ENCODE measurements at regions of chr14 and their contacts with region 1.

Region 1: DNA sequence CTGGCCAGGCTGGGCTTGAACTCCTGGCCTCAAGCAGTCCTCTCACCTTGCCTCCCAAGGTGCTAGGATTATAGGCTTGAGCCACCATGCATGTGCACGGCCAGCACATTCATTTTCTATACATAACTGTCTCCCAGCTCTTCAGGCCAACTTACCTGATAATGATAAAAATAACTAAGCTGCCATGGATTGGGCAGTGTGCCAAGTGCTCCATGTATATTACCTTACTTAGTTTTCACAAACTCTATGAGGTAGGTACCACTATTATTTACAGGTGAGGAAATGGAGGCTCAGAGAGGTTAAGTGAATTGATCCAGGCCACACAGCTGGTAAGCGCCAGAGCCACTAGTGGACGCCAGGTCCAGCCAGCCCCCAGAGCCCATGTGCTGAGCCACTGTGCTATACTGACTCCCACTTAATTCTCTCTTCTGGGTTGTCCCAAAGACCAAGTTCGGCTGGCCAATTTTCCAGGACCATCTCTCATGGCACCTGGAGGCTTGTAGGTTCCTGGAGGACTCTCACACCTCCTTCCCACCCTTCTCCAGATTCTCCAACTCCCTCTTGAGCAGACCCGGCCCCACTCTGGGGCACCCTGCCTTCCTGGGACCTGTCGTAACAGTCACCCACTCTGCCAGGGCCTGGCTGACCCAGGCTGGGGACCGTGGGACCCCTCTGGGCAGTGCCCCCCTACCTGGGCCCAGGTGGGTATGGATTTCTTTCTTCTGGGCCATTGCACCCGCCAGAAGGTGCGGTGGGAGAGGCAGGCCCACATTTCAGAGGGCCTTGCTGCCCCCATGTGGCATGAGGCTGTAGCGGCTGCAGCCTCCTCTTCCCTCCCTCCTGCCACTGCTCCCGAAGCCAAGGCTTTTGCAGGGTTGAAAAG is 30.2 kb upstream of the CIPC start:
- DNase-seq: no peak
- ATAC-seq: peak; percentile 88
- H3K4me3 ChIP-seq: no peak overlapping the region
- H3K27ac ChIP-seq: no peak overlapping the region
- H3K4me1 ChIP-seq: 0 out of 2 replicates have a peak, but pooled peaks cover 6% of the 10 kb centered on the region
- H3K27me3 ChIP-seq: peaks cover 3 to 24% of the 10 kb centered on the region in 2 experiments; a peak in 4 of 5 replicates
- CTCF ChIP-seq: peak; percentile 93
- EP300 ChIP-seq: no peak
- POLR2A ChIP-seq: no peak
- RAD21 ChIP-seq: peak; percentile 93

Region 2: DNA sequence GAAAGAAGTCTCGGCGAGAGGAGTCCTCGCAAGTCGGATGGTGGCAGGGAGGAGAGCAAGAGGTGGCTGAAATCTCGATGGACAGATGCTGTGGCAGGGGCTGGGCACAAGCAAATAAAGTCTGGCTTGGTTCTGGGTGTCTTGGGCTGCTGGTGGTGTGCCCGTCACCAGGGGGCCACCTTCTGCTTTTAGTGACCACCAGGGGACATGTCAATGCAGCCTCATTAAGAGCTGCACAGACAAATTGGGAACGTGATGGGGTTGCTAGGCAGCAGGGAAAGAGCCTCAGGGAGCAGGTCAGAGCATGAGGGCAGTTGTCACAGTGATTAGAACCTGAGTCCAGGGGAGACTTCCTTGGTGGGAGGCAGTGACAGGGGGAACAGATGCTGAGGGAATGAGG is 197.7 kb before region 1 on chr14:
- CTCF ChIA-PET with region 1: interaction called, 68 read pairs
- POLR2A ChIA-PET with region 1: no interaction called
- in situ Hi-C with region 1: loop called (anchors 5 kb)
- intact Hi-C with region 1: no loop called
- DNase-seq: peak; percentile 16
- ATAC-seq: peak; percentile 81
- H3K4me3 ChIP-seq: no peak overlapping the region
- H3K27ac ChIP-seq: no peak overlapping the region
- H3K4me1 ChIP-seq: no peaks in the 10 kb centered on the region
- H3K27me3 ChIP-seq: peaks cover 0 to 3% of the 10 kb centered on the region in 2 experiments; a peak in 1 of 5 replicates
- CTCF ChIP-seq: peak; percentile 40
- EP300 ChIP-seq: no peak
- POLR2A ChIP-seq: no peak
- RAD21 ChIP-seq: no peak

Region 3: DNA sequence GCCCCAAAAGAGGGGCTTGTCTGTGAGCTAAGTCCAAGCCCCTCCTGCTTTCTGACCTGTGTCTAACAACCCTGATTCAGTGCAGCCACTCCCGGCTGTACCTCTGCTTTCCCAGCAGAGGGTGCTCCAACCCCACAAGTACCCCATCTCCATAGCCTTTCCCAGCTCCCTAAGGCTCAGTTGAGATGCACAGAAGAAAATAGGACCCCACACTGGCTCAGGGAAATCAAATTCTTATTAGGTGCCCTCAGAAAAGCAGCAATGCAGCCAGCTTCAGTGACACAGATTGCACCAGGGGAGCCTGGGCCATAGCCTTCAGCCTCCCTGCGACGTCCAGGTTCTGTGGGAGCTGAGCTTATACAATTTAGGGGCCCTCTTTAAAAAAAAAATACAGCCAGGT is 191.8 kb before region 1 on chr14:
- CTCF ChIA-PET with region 1: interaction called, 68 read pairs
- POLR2A ChIA-PET with region 1: interaction called, 3 read pairs
- in situ Hi-C with region 1: no loop called
- intact Hi-C with region 1: loop called (anchors 1 kb)
- DNase-seq: peak; percentile 43
- ATAC-seq: peak; percentile 93
- H3K4me3 ChIP-seq: no peak overlapping the region
- H3K27ac ChIP-seq: no peak overlapping the region
- H3K4me1 ChIP-seq: no peaks in the 10 kb centered on the region
- H3K27me3 ChIP-seq: peaks cover 4 to 10% of the 10 kb centered on the region in 2 experiments; a peak in 3 of 5 replicates
- CTCF ChIP-seq: peak; percentile 92
- EP300 ChIP-seq: no peak
- POLR2A ChIP-seq: no peak
- RAD21 ChIP-seq: peak; percentile 90

Region 4: DNA sequence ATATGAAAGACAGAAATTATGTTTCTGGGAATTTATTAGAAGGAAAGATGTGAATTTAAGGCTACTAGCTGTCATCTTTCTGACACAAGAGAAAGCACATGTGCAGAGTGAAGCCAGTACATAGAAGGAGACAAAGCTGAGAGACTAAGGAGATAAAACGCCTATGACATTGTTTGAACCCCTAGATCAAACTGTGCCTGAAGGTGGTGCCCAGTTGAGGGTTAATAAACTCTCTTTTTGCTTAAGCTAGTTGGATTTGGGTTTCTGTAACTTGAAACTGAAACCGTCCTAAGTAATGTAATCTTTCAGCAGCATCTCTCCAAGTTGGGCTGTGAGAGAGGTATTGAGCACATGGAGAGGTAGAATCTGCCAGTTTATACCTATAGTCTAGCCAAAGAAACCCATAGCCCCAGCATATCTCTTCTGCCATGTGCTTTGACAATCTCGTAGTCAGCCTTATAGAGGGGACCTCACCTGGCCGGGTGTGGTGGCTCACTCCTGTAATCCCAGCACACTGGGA is 157.4 kb before region 1 on chr14:
- CTCF ChIA-PET with region 1: interaction called, 53 read pairs
- POLR2A ChIA-PET with region 1: no interaction called
- in situ Hi-C with region 1: loop called (anchors 5 kb)
- intact Hi-C with region 1: loop called (anchors 1 kb)
- DNase-seq: no peak
- ATAC-seq: no peak
- H3K4me3 ChIP-seq: no peak overlapping the region
- H3K27ac ChIP-seq: no peak overlapping the region
- H3K4me1 ChIP-seq: peaks cover 6% of the 10 kb centered on the region; the same call in 1 of the 2 replicates
- H3K27me3 ChIP-seq: no peaks in the 10 kb centered on the region
- CTCF ChIP-seq: no peak
- EP300 ChIP-seq: no peak
- POLR2A ChIP-seq: no peak
- RAD21 ChIP-seq: no peak

Region 5: GRCh38 chr14:76918751-76919543 is 148.9 kb before region 1 on chr14:
- CTCF ChIA-PET with region 1: interaction called, 53 read pairs
- POLR2A ChIA-PET with region 1: no interaction called
- in situ Hi-C with region 1: loop called (anchors 5 kb)
- intact Hi-C with region 1: no loop called
- DNase-seq: peak; percentile 24
- ATAC-seq: peak; percentile 77
- H3K4me3 ChIP-seq: peak overlapping the region; percentile 9 to 61 (median 39); a peak in 3 of 6 replicates
- H3K27ac ChIP-seq: no peak overlapping the region
- H3K4me1 ChIP-seq: peaks cover 53% of the 10 kb centered on the region
- H3K27me3 ChIP-seq: peaks cover 3 to 18% of the 10 kb centered on the region in 2 experiments; a peak in 3 of 5 replicates
- CTCF ChIP-seq: no peak
- EP300 ChIP-seq: no peak
- POLR2A ChIP-seq: no peak
- RAD21 ChIP-seq: no peak

Region 6: GRCh38 chr14:77014004-77014604 is 53.8 kb before region 1 on chr14:
- CTCF ChIA-PET with region 1: no interaction called
- POLR2A ChIA-PET with region 1: no interaction called
- in situ Hi-C with region 1: no loop called
- intact Hi-C with region 1: no loop called
- DNase-seq: peak; percentile 68
- ATAC-seq: peak; percentile 73
- H3K4me3 ChIP-seq: peak overlapping the region in 1 of 3 experiments; percentile 23; a peak in 1 of 6 replicates
- H3K27ac ChIP-seq: no peak overlapping the region
- H3K4me1 ChIP-seq: peaks cover 84% of the 10 kb centered on the region
- H3K27me3 ChIP-seq: peaks cover 0 to 33% of the 10 kb centered on the region in 2 experiments; a peak in 3 of 5 replicates
- CTCF ChIP-seq: no peak
- EP300 ChIP-seq: no peak
- POLR2A ChIP-seq: no peak
- RAD21 ChIP-seq: no peak

Region 7: DNA sequence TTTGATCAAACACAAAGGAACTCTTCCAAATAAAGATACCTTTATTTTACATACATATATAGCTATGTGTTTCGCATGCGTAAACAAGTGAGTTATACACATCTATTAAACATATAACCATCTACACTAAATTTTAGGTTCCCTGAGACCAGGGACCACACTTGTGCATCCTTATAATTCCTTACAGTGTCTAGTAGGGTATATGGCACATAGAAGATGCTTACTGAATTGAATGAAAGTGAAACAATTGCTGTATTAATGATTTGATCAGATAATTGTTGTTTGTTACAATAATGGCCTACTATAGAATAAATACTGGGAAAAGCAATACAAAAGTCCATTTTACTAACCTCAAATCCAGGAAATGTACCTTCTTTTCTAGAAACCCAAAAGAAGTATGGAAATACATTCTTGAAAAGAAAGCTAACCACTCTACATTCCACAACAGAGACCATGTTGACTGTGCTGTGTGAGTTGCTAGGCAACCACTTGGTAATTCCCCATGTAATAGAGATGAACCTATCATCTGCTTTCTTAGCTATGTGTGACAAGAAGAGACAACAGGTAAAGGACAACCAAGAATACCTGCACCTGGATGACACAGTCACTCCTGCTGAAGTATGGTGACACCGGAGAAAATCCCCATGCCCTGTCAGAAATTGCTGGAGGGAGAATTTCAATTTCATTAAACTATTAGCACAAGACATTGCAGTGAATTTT is 18.3 kb after region 1 on chr14:
- CTCF ChIA-PET with region 1: no interaction called
- POLR2A ChIA-PET with region 1: no interaction called
- in situ Hi-C with region 1: no loop called
- intact Hi-C with region 1: no loop called
- DNase-seq: peak; percentile 25
- ATAC-seq: no peak
- H3K4me3 ChIP-seq: no peak overlapping the region
- H3K27ac ChIP-seq: no peak overlapping the region
- H3K4me1 ChIP-seq: 0 out of 2 replicates have a peak, but pooled peaks cover 9% of the 10 kb centered on the region
- H3K27me3 ChIP-seq: 0 out of 5 replicates have a peak, but pooled peaks cover 0 to 5% of the 10 kb centered on the region in 2 experiments
- CTCF ChIP-seq: no peak
- EP300 ChIP-seq: no peak
- POLR2A ChIP-seq: no peak
- RAD21 ChIP-seq: no peak

Region 8: DNA sequence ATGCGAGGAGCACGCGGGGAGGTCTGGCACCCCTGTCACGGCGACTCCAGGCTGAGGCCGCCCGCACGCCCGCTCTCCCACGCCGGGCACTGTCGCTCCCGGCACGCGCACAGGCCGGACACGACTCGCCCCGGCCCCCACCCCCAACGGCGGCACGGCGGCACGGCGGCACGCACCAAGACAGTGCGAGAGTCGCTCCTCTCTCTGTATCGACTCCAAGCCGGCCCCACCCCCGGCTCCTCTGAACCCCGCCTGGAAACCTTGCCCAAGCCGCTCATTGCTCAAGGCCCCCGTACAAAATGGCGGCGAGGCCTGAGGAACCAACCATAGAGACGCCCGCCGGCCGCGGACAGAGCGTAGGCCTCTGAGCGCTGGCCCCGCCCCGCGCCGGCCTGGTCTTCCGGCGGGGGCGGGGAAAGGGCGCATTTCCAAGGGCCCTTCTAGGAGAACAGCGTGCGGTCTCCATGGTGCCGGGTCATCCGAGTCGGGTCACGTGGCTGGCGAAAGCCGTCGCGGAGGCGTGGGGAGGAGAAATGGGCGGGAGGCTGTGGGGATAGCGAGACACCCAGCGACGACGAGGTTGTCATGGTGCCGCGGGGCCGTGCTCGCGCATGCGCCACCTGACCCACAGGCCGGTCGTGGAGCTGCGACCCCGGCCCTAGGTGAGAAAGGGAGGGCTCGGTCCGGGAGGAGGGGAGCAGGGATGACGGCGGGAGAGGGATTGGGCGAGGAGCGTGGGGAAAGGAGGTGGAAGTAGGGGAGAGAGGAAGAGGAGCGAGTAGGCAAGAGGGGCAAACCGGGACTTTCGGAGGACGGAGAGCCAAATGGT is 30.0 kb after region 1 on chr14 and contains the start of gene CIPC:
- CTCF ChIA-PET with region 1: interaction called, 4 read pairs
- POLR2A ChIA-PET with region 1: no interaction called
- in situ Hi-C with region 1: no loop called
- intact Hi-C with region 1: loop called (anchors 1 kb)
- DNase-seq: peak; percentile 96
- ATAC-seq: peak; percentile 93
- H3K4me3 ChIP-seq: peak within 1 kb of the TSS; percentile 75 to 97 (median 92)
- H3K27ac ChIP-seq: peak within 1 kb of the TSS; percentile 88
- H3K4me1 ChIP-seq: peaks cover 27% of the 10 kb centered on the region
- H3K27me3 ChIP-seq: no peaks in the 10 kb centered on the region; a peak in 1 of 5 replicates
- CTCF ChIP-seq: peak; percentile 25; the same call in 1 of the 2 replicates
- EP300 ChIP-seq: peak; percentile 25 to 43; a peak in 1 of 4 replicates
- POLR2A ChIP-seq: peak in 1 of 2 experiments; percentile 72; a peak in 3 of 4 replicates
- RAD21 ChIP-seq: peak; percentile 18; the same call in 1 of the 2 replicates
- total RNA-seq, gene CIPC: 13.9 and 18.4 TPM in 2 replicates